ENCODE measurements at regions of chr22 and their contacts with region 1.

Region 1: DNA sequence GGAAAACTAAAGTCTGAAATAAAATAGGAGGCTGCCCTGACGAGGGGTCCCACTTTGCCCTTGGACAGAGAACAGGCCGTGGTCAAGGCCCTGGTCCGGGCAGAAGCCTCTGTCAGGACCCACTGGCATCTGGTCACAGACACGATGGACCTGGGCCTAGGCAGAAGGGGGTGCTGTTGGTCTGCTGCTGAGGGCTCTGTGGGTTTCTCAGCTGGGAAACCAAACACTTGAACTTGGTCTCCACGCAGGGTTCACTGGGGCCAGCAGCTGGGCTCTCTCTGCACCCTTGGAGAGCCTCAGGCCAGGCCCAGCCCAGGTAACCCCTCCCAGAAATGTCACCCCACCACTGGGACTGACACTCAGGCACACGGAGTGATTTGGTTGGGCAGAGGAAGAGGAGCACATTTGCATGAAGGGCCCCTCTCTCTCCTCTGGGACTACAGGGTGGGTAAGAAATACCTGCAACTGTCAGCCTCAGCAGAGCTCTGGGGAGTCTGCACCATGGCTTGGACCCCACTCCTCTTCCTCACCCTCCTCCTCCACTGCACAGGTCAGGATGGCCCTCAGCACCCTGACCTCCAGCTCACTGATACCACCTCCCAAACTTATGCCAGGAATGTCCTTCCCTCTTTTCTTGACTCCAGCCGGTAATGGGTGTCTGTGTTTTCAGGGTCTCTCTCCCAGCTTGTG is 48.1 kb upstream of the TOP3B start:
- DNase-seq: peak; percentile 62
- ATAC-seq: peak; percentile 79
- H3K4me3 Mint-ChIP-seq: peak overlapping the region; percentile 84
- H3K27ac Mint-ChIP-seq: peak overlapping the region; percentile 97
- H3K4me1 Mint-ChIP-seq: peaks cover 84% of the 10 kb centered on the region
- H3K27me3 Mint-ChIP-seq: no peaks in the 10 kb centered on the region
- CTCF ChIP-seq: no peak

Region 2: GRCh38 chr22:21992593-21993237 is 37.9 kb before region 1 on chr22:
- CTCF ChIA-PET with region 1: no interaction called
- POLR2A ChIA-PET with region 1: no interaction called
- intact Hi-C with region 1: no loop called
- DNase-seq: no peak
- ATAC-seq: no peak
- H3K4me3 Mint-ChIP-seq: no peak overlapping the region
- H3K27ac Mint-ChIP-seq: no peak overlapping the region
- H3K4me1 Mint-ChIP-seq: no peaks in the 10 kb centered on the region
- H3K27me3 Mint-ChIP-seq: peaks cover 1% of the 10 kb centered on the region
- CTCF ChIP-seq: no peak

Region 3: DNA sequence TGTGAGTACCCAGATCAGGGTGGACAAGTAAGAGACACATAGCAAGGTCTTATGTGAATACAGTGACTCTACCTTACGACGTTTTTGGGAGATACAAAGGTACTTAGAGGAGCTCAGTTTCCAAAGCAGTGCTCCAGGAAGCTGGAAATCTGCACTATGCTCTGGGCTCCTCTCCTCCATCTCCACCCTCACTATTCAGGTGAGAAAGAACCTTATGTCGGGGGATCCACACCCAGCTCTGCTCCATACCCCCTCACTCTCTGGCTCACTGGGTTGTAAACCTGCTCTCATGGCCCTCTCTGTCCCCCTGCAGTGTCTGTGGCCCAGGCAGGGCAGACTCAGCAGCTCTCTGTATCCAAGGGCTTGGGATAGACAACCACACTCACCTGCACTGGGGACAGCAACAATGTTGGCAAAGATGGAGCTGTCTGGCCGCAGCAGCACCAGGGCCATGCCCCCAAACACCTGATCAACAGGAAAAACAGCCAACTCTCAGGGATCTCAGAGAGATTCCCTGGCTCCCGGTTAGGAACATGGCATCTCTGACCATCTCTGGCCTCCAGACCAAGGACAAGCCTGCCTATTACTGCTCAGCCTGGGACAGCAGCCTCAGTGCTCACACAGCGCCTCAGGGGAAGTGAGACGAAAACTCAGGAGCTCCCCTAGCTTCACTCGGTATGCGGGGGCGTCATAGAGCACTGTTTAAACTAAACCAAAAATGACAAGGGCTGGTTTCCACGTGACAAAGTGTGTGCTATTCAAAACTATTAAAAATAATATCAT is 12.8 kb after region 1 on chr22:
- CTCF ChIA-PET with region 1: interaction called, 38 read pairs
- POLR2A ChIA-PET with region 1: interaction called, 65 read pairs
- intact Hi-C with region 1: loop called (anchors 1 kb)
- DNase-seq: no peak
- ATAC-seq: peak; percentile 73
- H3K4me3 Mint-ChIP-seq: peak overlapping the region; percentile 82
- H3K27ac Mint-ChIP-seq: peak overlapping the region; percentile 82
- H3K4me1 Mint-ChIP-seq: peaks cover 73% of the 10 kb centered on the region
- H3K27me3 Mint-ChIP-seq: no peaks in the 10 kb centered on the region
- CTCF ChIP-seq: no peak

Region 4: GRCh38 chr22:22156716-22157347 is 126.2 kb after region 1 on chr22:
- CTCF ChIA-PET with region 1: interaction called, 13 read pairs
- POLR2A ChIA-PET with region 1: interaction called, 11 read pairs
- intact Hi-C with region 1: loop called (anchors 1 kb)
- DNase-seq: peak; percentile 64
- ATAC-seq: peak; percentile 75
- H3K4me3 Mint-ChIP-seq: peak overlapping the region; percentile 78
- H3K27ac Mint-ChIP-seq: peak overlapping the region; percentile 98
- H3K4me1 Mint-ChIP-seq: peaks cover 52% of the 10 kb centered on the region
- H3K27me3 Mint-ChIP-seq: no peaks in the 10 kb centered on the region
- CTCF ChIP-seq: peak; percentile 81

Region 5: GRCh38 chr22:22195265-22196017 is 164.8 kb after region 1 on chr22:
- CTCF ChIA-PET with region 1: interaction called, 22 read pairs
- POLR2A ChIA-PET with region 1: interaction called, 11 read pairs
- intact Hi-C with region 1: loop called (anchors 2 kb)
- DNase-seq: peak; percentile 79
- ATAC-seq: peak; percentile 71
- H3K4me3 Mint-ChIP-seq: peak overlapping the region; percentile 68
- H3K27ac Mint-ChIP-seq: peak overlapping the region; percentile 85
- H3K4me1 Mint-ChIP-seq: peaks cover 59% of the 10 kb centered on the region
- H3K27me3 Mint-ChIP-seq: no peaks in the 10 kb centered on the region
- CTCF ChIP-seq: peak; percentile 80

Region 6: GRCh38 chr22:22322792-22323191 is 292.2 kb after region 1 on chr22:
- CTCF ChIA-PET with region 1: interaction called, 8 read pairs
- POLR2A ChIA-PET with region 1: no interaction called
- intact Hi-C with region 1: loop called (anchors 1 kb)
- DNase-seq: no peak
- ATAC-seq: peak; percentile 11
- H3K4me3 Mint-ChIP-seq: peak overlapping the region; percentile 15
- H3K27ac Mint-ChIP-seq: no peak overlapping the region
- H3K4me1 Mint-ChIP-seq: peaks cover 43% of the 10 kb centered on the region
- H3K27me3 Mint-ChIP-seq: no peaks in the 10 kb centered on the region
- CTCF ChIP-seq: no peak

Region 7: GRCh38 chr22:22357024-22357883 is 326.6 kb after region 1 on chr22:
- CTCF ChIA-PET with region 1: no interaction called
- POLR2A ChIA-PET with region 1: no interaction called
- intact Hi-C with region 1: no loop called
- DNase-seq: peak; percentile 74
- ATAC-seq: peak; percentile 87
- H3K4me3 Mint-ChIP-seq: peak overlapping the region; percentile 65
- H3K27ac Mint-ChIP-seq: peak overlapping the region; percentile 79
- H3K4me1 Mint-ChIP-seq: peaks cover 55% of the 10 kb centered on the region
- H3K27me3 Mint-ChIP-seq: no peaks in the 10 kb centered on the region
- CTCF ChIP-seq: no peak

Region 8: GRCh38 chr22:22942511-22943329 is 912.1 kb after region 1 on chr22:
- CTCF ChIA-PET with region 1: no interaction called
- POLR2A ChIA-PET with region 1: no interaction called
- intact Hi-C with region 1: loop called (anchors 2 kb)
- DNase-seq: peak; percentile 62
- ATAC-seq: peak; percentile 75
- H3K4me3 Mint-ChIP-seq: peak overlapping the region; percentile 29
- H3K27ac Mint-ChIP-seq: peak overlapping the region; percentile 85
- H3K4me1 Mint-ChIP-seq: peaks cover 90% of the 10 kb centered on the region
- H3K27me3 Mint-ChIP-seq: no peaks in the 10 kb centered on the region
- CTCF ChIP-seq: peak; percentile 27

Measured in activated B cell treated with CpG ODN at 0.5 μM for 24 hours (primary cell).